ENCODE measurements at regions of chr3 and their contacts with region 1.

Region 1: DNA sequence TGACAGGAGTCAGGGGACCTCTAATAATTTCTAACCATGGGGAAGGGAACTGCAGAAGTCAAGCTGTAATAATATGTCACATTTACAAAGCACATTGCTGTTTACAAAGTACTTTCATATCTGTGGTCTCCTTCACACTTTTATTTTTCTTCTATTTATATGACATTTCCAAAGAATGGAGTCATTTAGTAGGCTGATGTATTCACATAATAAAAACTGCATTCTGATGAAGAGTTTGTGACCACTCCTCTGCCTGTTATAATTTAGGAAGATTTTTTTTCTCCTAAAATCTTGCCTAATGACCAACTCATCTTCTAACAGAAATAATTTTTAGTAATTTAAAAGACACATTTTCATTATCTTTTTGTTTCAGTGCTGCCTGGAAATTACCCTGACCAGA is 272.2 kb upstream of the VEPH1 start:
- DNase-seq: no peak
- H3K4me3 Mint-ChIP-seq: no peak overlapping the region
- H3K27ac Mint-ChIP-seq: no peak overlapping the region
- H3K4me1 Mint-ChIP-seq: no peaks in the 10 kb centered on the region
- H3K27me3 Mint-ChIP-seq: no peaks in the 10 kb centered on the region
- CTCF ChIP-seq: no peak

Region 2: GRCh38 chr3:158097593-158098308 is 322.3 kb after region 1 on chr3:
- CTCF ChIA-PET with region 1: no interaction called
- POLR2A ChIA-PET with region 1: no interaction called
- intact Hi-C with region 1: loop called (anchors 10 kb)
- DNase-seq: peak; percentile 74
- H3K4me3 Mint-ChIP-seq: peak overlapping the region; percentile 84
- H3K27ac Mint-ChIP-seq: peak overlapping the region; percentile 58
- H3K4me1 Mint-ChIP-seq: peaks cover 6% of the 10 kb centered on the region
- H3K27me3 Mint-ChIP-seq: no peaks in the 10 kb centered on the region
- CTCF ChIP-seq: no peak